Activated CD4-positive, alpha-beta T cell treated with anti-CD3 and anti-CD28 coated beads for 36 hours (primary cell): ENCODE measurements at regions of chr19 and their contacts with region 1.

Region 1: DNA sequence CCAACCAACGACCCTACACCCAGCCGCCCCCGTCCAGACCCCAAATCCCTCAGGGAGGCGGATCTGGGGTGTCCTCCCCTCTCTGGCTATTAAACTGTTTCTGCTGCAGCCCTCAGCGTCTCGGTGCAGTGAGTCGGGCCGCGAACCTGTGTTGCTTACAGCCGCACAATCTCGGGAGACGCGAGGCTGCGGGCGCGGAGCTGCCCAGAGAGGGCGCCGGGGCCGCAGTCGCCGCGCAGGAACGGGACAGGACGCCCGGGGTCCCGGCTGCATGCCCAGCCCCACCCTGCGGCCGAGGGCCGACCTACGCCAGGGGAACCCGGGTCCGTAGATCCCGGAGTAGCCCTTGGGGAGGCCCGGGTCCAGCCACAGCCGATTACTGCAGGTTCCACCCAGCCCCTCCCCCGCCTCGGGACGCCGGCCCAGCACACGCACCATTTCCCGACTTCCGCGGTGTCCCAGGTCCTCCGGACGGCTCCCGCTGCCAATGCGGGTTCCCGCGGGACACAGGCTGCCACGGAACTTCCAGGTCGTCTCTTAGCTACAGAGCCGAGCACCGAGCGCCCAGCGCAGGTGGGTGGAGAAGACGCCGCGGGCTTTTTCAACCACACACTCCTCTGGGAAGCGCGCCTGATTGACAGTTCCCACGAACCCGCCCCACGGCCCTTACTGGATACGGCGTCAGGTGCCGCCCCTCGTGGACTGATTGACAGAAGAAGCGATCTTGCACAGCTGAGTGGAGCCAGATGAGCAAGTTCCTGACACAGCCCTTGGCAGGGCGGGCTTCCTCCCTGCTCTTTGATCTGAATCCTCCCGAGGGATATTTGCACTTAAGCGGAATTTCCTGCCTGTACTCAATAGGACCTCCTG is at the start of gene ZNF799:
- DNase-seq: peak; percentile 94
- ATAC-seq: peak; percentile 96
- H3K4me3 Mint-ChIP-seq: peak within 1 kb of the TSS; percentile 86
- H3K27ac Mint-ChIP-seq: peak within 1 kb of the TSS; percentile 77
- H3K4me1 Mint-ChIP-seq: peaks cover 13% of the 10 kb centered on the region
- H3K27me3 Mint-ChIP-seq: no peaks in the 10 kb centered on the region
- total RNA-seq, gene ZNF799: 4.0 to 4.3 TPM

Region 2: GRCh38 chr19:12162882-12163806 is 237.7 kb before region 1 on chr19 and contains the start of gene ZNF136:
- CTCF ChIA-PET with region 1: no interaction called
- POLR2A ChIA-PET with region 1: no interaction called
- intact Hi-C with region 1: loop called in 1 of 2 experiments (anchors 1 kb)
- DNase-seq: peak; percentile 97
- ATAC-seq: peak; percentile 100
- H3K4me3 Mint-ChIP-seq: peak within 1 kb of the TSS; percentile 98
- H3K27ac Mint-ChIP-seq: peak within 1 kb of the TSS; percentile 99
- H3K4me1 Mint-ChIP-seq: peaks cover 38% of the 10 kb centered on the region
- H3K27me3 Mint-ChIP-seq: no peaks in the 10 kb centered on the region
- total RNA-seq, gene ZNF136: 11.7 to 12.9 TPM

Region 3: DNA sequence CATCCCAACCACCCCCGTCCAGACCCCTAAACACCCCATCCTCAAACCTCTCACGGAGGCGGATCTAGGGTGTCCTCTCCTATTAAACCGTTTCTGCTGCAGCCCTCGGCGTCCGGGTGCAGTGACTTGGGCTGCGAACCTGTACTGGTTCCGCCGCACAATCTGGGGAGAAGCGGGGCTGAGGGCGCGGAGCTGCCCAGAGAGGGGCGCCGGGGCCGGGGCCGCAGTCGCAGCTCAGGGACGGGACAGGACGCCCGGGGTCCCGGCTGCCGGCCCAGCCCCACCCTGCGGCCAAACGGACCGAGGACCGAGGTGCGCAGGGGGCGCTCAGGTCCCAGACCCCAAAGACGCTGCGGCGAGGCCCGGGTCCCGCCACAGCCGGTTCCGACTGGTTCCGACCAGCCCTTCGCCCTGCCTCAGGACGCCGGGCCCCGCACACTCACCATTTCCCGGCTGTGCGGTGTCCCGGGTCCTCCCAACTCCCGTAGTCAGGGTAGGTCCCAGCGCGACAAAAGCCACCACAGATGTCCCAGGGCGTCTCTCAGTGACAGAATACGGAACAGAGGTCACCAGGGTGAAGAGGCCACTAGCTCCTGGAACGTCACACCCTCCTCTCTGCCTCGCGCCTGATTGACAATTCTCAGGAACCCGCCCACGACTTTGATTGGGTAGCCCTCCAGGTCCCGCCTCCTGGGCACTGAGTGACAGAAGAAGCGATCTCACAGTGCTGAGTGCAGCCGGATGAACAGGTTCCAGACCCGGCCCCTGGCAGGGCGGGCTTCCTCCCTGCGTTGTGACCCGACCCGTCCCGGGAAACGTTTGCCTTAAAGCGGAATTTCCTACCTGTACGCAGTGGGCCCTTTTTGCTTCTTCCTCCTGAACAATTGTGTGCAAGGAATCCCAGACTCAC is 106.4 kb before region 1 on chr19 and contains the start of gene ZNF44:
- CTCF ChIA-PET with region 1: no interaction called
- POLR2A ChIA-PET with region 1: interaction called, 3 read pairs
- intact Hi-C with region 1: loop called in 1 of 2 experiments (anchors 1 kb)
- DNase-seq: peak; percentile 98
- ATAC-seq: peak; percentile 98
- H3K4me3 Mint-ChIP-seq: peak within 1 kb of the TSS; percentile 98
- H3K27ac Mint-ChIP-seq: peak within 1 kb of the TSS; percentile 98
- H3K4me1 Mint-ChIP-seq: peaks cover 32% of the 10 kb centered on the region
- H3K27me3 Mint-ChIP-seq: no peaks in the 10 kb centered on the region
- total RNA-seq, gene ZNF44: 7.3 to 8.1 TPM

Region 4: DNA sequence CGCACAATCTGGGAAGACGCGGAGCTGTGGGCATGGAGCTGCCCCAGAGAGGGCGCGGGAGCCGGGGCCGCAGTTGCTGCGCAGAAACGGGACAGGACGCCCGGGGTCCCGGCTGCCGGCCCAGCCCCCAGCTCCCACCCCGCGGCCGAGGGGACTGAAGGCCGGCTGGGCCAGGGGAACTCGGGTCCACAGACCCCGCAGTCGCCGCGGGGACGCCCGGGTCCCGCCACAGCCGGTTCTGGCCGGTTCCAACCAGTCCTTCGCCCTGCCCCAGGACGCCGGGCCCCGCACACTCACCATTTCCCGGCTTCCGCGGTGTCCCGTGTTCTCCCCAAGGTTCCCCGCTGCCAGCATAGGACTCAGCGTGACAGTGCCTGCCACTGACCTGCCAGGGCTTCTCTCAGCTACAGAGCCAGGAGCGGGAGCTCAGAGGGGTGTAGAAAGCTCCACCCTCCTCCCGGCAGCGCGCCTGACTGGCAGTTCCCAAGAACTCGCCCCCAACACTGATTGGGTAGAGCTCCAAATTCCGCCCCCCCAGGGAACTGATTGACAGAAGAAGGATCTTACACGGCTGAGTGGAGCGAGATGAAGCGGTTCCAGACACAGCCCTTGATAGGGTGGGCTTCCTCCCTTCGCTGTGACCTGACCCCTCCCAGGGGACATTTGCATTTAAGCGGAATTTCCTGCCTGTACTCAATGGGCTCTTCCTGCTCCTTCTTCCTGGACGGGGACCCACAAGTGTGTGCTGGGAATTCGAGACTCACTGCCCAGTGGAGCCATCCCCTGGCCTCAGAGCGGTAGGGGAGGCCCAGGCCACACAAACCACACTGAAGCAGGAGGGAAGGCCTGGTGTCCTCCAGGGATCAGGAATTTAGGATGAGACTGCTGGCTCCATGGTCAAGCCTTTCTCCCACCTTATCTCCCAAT is 35.4 kb before region 1 on chr19 and contains the start of gene ZNF442:
- CTCF ChIA-PET with region 1: no interaction called
- POLR2A ChIA-PET with region 1: interaction called, 3 read pairs
- intact Hi-C with region 1: loop called in 1 of 2 experiments (anchors 1 kb)
- DNase-seq: peak; percentile 93
- ATAC-seq: peak; percentile 99
- H3K4me3 Mint-ChIP-seq: peak within 1 kb of the TSS; percentile 93
- H3K27ac Mint-ChIP-seq: peak within 1 kb of the TSS; percentile 79
- H3K4me1 Mint-ChIP-seq: peaks cover 18% of the 10 kb centered on the region
- H3K27me3 Mint-ChIP-seq: no peaks in the 10 kb centered on the region
- total RNA-seq, gene ZNF442: 1.1 to 1.7 TPM

Region 5: DNA sequence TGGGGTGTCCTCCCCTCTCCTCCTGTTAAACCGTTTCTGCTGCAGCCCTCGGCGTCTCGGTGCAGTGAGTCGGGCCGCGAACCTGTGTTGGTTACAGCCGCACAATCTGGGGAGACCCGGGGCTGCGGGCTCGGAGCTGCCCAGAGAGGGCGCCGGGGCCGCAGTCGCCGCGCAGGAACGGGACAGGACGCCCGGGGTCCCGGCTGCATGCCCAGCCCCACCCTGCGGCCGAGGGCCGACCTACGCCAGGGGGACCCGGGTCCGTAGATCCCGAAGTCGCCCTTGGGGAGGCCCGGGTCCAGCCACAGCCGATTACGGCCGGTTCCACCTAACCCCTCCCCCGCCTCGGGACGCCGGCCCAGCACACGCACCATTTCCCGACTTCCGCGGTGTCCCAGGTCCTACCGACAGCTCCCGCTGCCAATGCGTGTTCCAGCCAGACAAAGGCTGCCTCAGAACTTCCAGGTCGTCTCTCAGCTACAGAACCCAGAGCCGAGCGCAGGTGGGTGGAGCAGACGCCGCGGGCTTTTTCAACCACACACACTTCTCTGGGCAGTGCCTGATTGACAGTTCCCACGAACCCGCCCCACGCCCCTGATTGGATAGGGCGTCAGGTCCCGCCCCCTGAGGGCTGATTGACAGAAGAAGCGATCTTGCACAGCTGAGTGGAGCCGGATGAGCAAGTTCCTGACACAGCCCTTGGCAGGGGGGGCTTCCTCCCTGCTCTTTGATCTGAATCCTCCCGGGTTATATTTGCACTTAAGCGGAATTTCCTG is 39.9 kb after region 1 on chr19 and contains the start of gene ZNF443:
- CTCF ChIA-PET with region 1: no interaction called
- POLR2A ChIA-PET with region 1: no interaction called
- intact Hi-C with region 1: loop called in 1 of 2 experiments (anchors 1 kb)
- DNase-seq: peak; percentile 99
- ATAC-seq: peak; percentile 98
- H3K4me3 Mint-ChIP-seq: peak within 1 kb of the TSS; percentile 99
- H3K27ac Mint-ChIP-seq: peak within 1 kb of the TSS; percentile 99
- H3K4me1 Mint-ChIP-seq: peaks cover 10% of the 10 kb centered on the region
- H3K27me3 Mint-ChIP-seq: no peaks in the 10 kb centered on the region
- total RNA-seq, gene ZNF443: 3.4 to 4.0 TPM

Region 6: DNA sequence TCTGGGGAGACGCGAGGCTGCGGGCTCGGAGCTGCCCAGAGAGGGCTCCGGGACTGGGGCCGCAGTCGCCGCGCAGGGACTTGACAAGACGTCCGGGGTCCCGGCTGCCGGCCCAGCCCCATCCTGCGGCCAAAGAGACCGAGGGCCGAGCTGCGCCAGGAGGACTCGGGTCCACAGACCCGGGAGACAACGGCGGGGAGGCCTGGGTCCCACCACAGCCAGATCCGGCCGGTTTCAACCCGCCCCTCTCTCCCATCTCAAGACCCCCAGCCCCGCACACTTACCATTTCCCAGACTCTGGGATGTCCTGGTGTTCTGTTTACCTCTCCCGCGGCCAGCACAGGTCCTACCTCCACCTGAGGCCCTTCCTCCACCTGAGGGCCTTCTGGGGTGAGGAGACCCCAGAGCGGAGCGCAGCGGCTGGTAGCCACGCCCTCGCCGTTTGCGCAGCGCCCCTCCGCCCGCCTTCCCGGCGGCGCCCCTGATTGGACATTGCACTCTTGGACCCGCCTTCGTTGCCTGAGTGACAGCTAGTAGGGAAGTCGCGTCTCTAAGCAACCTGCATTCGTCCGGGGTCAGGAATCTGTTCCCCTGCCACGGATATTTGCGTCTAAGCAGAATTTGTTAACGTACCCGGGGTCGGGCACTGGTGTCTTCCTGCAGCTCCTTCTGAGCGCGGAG is 83.6 kb after region 1 on chr19 and contains the start of gene ZNF709:
- CTCF ChIA-PET with region 1: no interaction called
- POLR2A ChIA-PET with region 1: no interaction called
- intact Hi-C with region 1: loop called in 1 of 2 experiments (anchors 2 kb)
- DNase-seq: peak; percentile 92
- ATAC-seq: peak; percentile 98
- H3K4me3 Mint-ChIP-seq: peak within 1 kb of the TSS; percentile 87
- H3K27ac Mint-ChIP-seq: peak within 1 kb of the TSS; percentile 58
- H3K4me1 Mint-ChIP-seq: peaks cover 27% of the 10 kb centered on the region
- H3K27me3 Mint-ChIP-seq: no peaks in the 10 kb centered on the region
- total RNA-seq, gene ZNF709: 1.7 to 2.1 TPM

Region 7: GRCh38 chr19:12495002-12495802 is 94.3 kb after region 1 on chr19:
- CTCF ChIA-PET with region 1: no interaction called
- POLR2A ChIA-PET with region 1: no interaction called
- intact Hi-C with region 1: loop called in 1 of 2 experiments (anchors 1 kb)
- DNase-seq: peak; percentile 97
- ATAC-seq: peak; percentile 100
- H3K4me3 Mint-ChIP-seq: peak overlapping the region; percentile 75
- H3K27ac Mint-ChIP-seq: peak overlapping the region; percentile 71
- H3K4me1 Mint-ChIP-seq: peaks cover 7% of the 10 kb centered on the region
- H3K27me3 Mint-ChIP-seq: no peaks in the 10 kb centered on the region